Activated naive CD4-positive, alpha-beta T cell treated with anti-CD3 and anti-CD28 coated beads for 36 hours (primary cell): ENCODE measurements at regions of chr1 and their contacts with region 1.

Region 1: DNA sequence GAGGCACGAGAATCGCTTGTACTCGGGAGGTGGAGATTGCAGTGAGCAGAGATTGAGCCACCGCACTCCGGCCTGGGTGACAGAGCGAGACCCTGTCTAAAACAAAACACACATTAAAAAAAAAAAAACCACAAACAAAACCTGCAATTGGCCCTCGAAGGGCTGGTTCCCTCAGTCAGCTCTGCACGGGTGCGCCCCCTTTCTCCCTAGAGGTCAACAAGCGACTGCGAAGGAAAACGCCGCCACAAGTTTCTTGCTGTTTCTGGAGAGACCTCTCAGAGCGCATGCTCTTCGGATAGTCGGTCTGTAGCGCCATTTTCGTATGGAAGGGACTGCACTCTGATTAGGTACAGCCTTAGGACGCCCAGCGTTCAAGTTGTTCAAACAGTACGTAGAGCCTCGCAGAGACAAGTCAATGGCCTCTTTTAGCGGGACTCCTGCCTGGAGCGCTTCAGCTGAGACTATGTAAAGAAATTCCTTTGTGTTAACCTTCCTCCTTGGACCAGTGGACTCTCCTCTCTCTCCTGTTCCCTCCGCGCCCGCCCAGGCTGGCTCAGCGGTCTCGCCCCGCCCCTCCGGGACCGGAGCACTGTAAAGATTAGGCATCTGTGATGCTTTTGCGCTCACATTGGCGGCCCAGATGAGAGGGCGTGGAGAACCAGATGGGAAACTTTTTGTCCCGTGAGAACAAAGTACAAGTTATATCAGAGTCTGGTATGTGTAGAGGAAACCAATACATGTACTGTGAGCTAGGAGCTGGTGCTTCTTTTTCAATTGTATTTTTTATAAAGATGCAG is 1.0 kb upstream of the CDC14A start:
- DNase-seq: peak; percentile 92
- H3K4me3 Mint-ChIP-seq: peak overlapping the region; percentile 94
- H3K27ac Mint-ChIP-seq: peak overlapping the region; percentile 97
- H3K4me1 Mint-ChIP-seq: peaks cover 29% of the 10 kb centered on the region
- H3K27me3 Mint-ChIP-seq: no peaks in the 10 kb centered on the region

Region 2: DNA sequence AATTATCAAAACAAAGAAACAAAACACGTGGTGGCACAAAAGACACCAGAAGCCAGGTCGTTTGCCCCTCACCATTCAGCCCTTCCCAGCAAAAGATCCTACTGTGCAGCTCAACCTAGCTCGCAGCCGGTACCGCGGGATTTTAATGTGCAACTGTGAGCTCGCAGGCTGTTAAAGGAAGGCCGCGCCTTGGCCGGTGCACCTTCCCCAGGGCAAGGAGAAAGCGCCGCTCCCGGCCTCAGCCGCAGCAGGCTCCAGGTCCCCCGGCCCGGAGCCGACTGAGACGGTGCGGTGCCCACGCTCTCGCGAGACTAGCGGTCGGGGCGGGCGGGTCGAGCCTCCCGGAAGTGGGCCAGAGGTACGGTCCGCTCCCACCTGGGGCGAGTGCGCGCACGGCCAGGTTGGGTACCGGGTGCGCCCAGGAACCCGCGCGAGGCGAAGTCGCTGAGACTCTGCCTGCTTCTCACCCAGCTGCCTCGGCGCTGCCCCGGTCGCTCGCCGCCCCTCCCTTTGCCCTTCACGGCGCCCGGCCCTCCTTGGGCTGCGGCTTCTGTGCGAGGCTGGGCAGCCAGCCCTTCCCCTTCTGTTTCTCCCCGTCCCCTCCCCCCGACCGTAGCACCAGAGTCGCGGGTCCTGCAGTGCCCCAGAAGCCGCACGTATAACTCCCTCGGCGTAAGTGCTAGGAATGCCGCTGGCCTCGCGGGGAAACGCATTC is 501.4 kb before region 1 on chr1 and contains the start of gene AGL:
- CTCF ChIA-PET with region 1: no interaction called
- intact Hi-C with region 1: loop called (anchors 5 kb)
- DNase-seq: peak; percentile 89
- H3K4me3 Mint-ChIP-seq: peak within 1 kb of the TSS; percentile 98
- H3K27ac Mint-ChIP-seq: peak within 1 kb of the TSS; percentile 91
- H3K4me1 Mint-ChIP-seq: peaks cover 23% of the 10 kb centered on the region
- H3K27me3 Mint-ChIP-seq: no peaks in the 10 kb centered on the region
- total RNA-seq, gene AGL: 15.6 to 16.8 TPM

Region 3: GRCh38 chr1:100132566-100133477 is 218.5 kb before region 1 on chr1 and contains the starts of genes SASS6 and TRMT13:
- CTCF ChIA-PET with region 1: no interaction called
- intact Hi-C with region 1: loop called (anchors 1 kb)
- DNase-seq: peak; percentile 97
- H3K4me3 Mint-ChIP-seq: peak within 1 kb of the TSS; percentile 91
- H3K27ac Mint-ChIP-seq: peak within 1 kb of the TSS; percentile 87
- H3K4me1 Mint-ChIP-seq: peaks cover 37% of the 10 kb centered on the region
- H3K27me3 Mint-ChIP-seq: no peaks in the 10 kb centered on the region
- total RNA-seq, gene SASS6: 8.2 TPM
- total RNA-seq, gene TRMT13: 12.9 to 16.6 TPM

Region 4: DNA sequence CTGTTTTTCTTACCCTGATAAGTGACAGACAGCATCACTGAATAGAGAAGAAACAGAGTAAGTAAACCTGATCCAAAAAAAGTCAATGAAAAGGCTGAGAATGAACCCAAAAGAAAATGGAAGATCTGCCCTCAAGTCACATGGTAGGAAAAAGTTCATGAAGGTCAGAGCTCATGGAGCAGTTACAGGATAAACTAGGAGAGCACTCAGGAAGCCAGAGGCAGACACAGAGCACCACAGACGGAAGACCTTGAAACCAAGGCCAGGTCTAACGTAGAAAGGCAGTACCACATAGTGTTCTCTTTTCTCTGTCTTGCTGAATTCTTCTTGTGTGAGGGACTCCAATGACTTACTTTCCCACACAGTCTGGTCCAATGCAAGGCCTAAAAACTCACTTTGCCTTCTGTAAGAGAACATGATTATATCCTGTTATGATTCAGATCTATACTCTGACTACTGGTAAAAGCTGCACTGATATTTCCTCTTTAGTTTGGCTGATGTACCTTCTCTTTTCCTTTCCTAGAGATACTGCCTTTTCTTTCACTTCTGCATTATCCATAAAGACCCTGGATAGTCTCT is 44.5 kb before region 1 on chr1:
- CTCF ChIA-PET with region 1: no interaction called
- intact Hi-C with region 1: loop called (anchors 1 kb)
- DNase-seq: no peak
- H3K4me3 Mint-ChIP-seq: no peak overlapping the region
- H3K27ac Mint-ChIP-seq: no peak overlapping the region
- H3K4me1 Mint-ChIP-seq: peaks cover 16% of the 10 kb centered on the region
- H3K27me3 Mint-ChIP-seq: no peaks in the 10 kb centered on the region

Region 5: DNA sequence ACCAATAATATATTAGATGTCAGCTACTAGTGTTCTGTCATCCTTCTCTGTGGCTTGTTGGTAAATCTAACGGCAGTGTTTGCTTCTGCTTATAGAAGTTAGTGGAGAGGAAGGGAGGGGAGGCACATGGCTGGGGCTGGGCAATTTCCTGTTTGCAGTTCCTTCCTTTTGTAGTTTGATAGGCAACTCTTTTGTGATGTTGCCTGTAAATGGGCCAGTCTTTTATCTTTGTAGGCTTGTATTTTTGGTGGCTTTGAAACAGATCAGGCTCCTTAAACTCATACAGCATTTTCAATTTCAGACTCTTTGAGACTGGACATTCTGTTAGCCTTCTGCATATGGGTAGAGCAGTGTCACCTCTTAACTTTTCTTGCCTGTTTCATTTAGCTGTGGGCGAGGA is 49.1 kb after region 1 on chr1:
- CTCF ChIA-PET with region 1: interaction called, 10 read pairs
- intact Hi-C with region 1: loop called (anchors 1 kb)
- DNase-seq: peak; percentile 73
- H3K4me3 Mint-ChIP-seq: peak overlapping the region; percentile 60
- H3K27ac Mint-ChIP-seq: peak overlapping the region; percentile 94
- H3K4me1 Mint-ChIP-seq: peaks cover 75% of the 10 kb centered on the region
- H3K27me3 Mint-ChIP-seq: no peaks in the 10 kb centered on the region

Region 6: GRCh38 chr1:100443811-100444571 is 92.7 kb after region 1 on chr1:
- CTCF ChIA-PET with region 1: interaction called, 7 read pairs
- intact Hi-C with region 1: loop called (anchors 1 kb)
- DNase-seq: peak; percentile 53
- H3K4me3 Mint-ChIP-seq: peak overlapping the region; percentile 72
- H3K27ac Mint-ChIP-seq: peak overlapping the region; percentile 96
- H3K4me1 Mint-ChIP-seq: peaks cover 85% of the 10 kb centered on the region
- H3K27me3 Mint-ChIP-seq: no peaks in the 10 kb centered on the region